A549 (cell line): ENCODE measurements at regions of chr3 and their contacts with region 1.

Region 1: GRCh38 chr3:156542715-156543555 is 12.0 kb downstream of the SSR3 start:
- DNase-seq: no peak
- ATAC-seq: no peak
- H3K4me3 ChIP-seq: no peak overlapping the region
- H3K27ac ChIP-seq: no peak overlapping the region
- H3K4me1 ChIP-seq: peaks cover 2% of the 10 kb centered on the region; the same call in 2 of the 3 replicates
- CTCF ChIP-seq: no peak
- EP300 ChIP-seq: no peak
- POLR2A ChIP-seq: no peak
- RAD21 ChIP-seq: no peak

Region 2: DNA sequence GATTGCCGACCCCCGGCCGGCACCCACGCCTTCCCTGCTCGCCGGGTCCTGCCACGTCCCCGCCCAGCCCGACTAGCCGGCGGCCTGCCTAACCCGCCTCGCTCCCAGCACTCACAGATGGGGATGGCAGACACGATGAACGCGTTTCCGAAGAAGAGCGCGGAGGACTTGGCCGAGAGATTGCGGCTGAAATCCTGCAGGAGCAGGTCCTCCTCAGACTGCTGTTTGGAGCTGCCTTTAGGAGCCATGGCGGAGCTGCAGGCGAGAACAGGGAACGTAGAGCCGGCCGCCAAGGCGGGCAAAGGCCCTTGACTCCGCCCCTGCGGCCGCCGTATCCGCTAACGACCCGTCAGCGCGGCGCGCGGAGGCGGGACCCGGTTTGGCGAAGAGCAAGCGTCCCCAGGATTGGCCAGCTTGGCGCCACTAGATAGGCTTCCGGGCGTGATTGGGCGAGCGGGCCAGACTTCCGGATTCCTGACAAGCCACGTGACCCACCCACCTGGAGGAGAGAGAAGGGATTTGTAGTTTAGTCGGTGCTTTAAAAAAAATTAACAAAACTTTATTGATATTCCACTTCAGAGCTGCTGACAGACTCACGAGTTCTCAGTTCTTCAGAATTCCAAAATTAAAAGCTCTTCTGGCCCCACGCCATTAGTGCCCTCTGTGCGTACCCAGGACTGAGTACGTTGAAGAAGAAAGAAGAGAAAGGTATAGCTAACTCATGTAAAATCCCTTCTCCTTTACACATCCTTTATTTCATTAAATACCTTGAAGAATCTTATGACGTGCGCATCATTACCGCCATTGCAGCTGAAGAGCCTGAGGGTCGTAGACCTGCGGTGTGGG is 12.1 kb after region 1 on chr3 and contains the start of gene SSR3:
- CTCF ChIA-PET with region 1: interaction called, 25 read pairs
- POLR2A ChIA-PET with region 1: interaction called, 9 read pairs
- DNase-seq: peak; percentile 92 to 99
- ATAC-seq: peak; percentile 99 to 100
- H3K4me3 ChIP-seq: peak within 1 kb of the TSS; percentile 61
- H3K27ac ChIP-seq: peak within 1 kb of the TSS; percentile 83 to 93
- H3K4me1 ChIP-seq: peaks cover 16% of the 10 kb centered on the region; the same call in 2 of the 3 replicates
- CTCF ChIP-seq: no peak
- EP300 ChIP-seq: no peak
- POLR2A ChIP-seq: peak; percentile 76
- RAD21 ChIP-seq: no peak
- polyA plus RNA-seq, gene SSR3: 187 and 242 TPM in 2 replicates